Panc1 (cell line): ENCODE measurements at regions of chr3 and their contacts with region 1.

Region 1: GRCh38 chr3:48429960-48430707 is at the start of gene PLXNB1:
- DNase-seq: no peak
- ATAC-seq: no peak
- H3K4me3 ChIP-seq: peak within 1 kb of the TSS; percentile 53 to 59
- H3K27ac ChIP-seq: peak within 1 kb of the TSS; percentile 23; the same call in 1 of the 2 replicates
- H3K4me1 ChIP-seq: peaks cover 4% of the 10 kb centered on the region; the same call in 1 of the 2 replicates
- H3K27me3 ChIP-seq: no peaks in the 10 kb centered on the region
- CTCF ChIP-seq: no peak
- total RNA-seq, gene PLXNB1: 22.8 TPM

Region 2: GRCh38 chr3:48280881-48281280 is 149.3 kb before region 1 on chr3:
- CTCF ChIA-PET with region 1: no interaction called
- POLR2A ChIA-PET with region 1: no interaction called
- in situ Hi-C with region 1: no loop called
- intact Hi-C with region 1: loop called (anchors 5 kb)
- DNase-seq: no peak
- ATAC-seq: no peak
- H3K4me3 ChIP-seq: no peak overlapping the region
- H3K27ac ChIP-seq: no peak overlapping the region
- H3K4me1 ChIP-seq: no peaks in the 10 kb centered on the region
- H3K27me3 ChIP-seq: no peaks in the 10 kb centered on the region
- CTCF ChIP-seq: no peak

Region 3: GRCh38 chr3:48607519-48607918 is 177.4 kb after region 1 on chr3:
- CTCF ChIA-PET with region 1: no interaction called
- POLR2A ChIA-PET with region 1: no interaction called
- in situ Hi-C with region 1: no loop called
- intact Hi-C with region 1: no loop called
- DNase-seq: no peak
- ATAC-seq: no peak
- H3K4me3 ChIP-seq: no peak overlapping the region
- H3K27ac ChIP-seq: no peak overlapping the region
- H3K4me1 ChIP-seq: peaks cover 6% of the 10 kb centered on the region
- H3K27me3 ChIP-seq: no peaks in the 10 kb centered on the region
- CTCF ChIP-seq: no peak

Region 4: GRCh38 chr3:48623851-48624547 is 193.9 kb after region 1 on chr3:
- CTCF ChIA-PET with region 1: no interaction called
- POLR2A ChIA-PET with region 1: no interaction called
- in situ Hi-C with region 1: no loop called
- intact Hi-C with region 1: no loop called
- DNase-seq: no peak
- ATAC-seq: no peak
- H3K4me3 ChIP-seq: no peak overlapping the region
- H3K27ac ChIP-seq: no peak overlapping the region
- H3K4me1 ChIP-seq: no peaks in the 10 kb centered on the region
- H3K27me3 ChIP-seq: no peaks in the 10 kb centered on the region
- CTCF ChIP-seq: no peak

Region 5: DNA sequence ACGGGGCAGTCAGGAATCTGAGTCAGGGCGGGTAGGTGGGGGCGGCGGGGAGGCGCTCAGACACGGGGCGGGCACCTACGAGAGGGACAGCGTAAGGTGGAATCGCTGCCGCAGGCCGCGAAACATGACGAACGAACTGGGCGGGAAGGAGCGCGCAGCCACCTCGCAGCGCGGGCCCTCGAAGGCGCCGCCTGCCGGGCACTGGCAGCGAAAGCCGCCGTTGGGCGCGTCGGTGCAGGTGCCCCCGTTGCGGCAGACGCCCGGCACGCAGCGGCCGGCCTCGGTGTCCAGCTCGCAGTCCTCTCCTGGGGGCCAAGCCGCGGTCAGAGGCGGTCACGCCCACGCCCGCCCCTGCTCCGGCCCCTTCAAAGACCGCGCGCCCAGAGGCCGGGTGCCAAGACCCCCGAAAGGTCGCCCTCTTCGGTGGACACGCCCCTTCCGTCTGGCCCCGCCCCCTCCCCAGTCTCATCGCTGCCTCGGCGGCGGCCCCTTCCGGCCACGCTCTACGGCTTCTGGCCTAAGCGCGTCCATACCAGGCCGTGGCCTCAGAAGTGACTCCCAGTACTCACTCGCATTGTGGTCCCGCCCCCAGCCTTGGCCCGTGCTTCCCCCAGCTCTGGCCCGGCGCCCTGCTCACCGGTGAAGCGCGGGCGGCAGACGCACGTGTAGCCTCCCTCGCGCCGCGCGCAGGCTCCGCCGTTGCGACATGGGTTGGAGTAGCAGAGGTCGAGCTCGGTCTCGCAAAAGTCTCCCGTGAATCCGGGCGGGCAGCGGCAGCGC is 226.1 kb after region 1 on chr3:
- CTCF ChIA-PET with region 1: no interaction called
- POLR2A ChIA-PET with region 1: no interaction called
- in situ Hi-C with region 1: no loop called
- intact Hi-C with region 1: no loop called
- DNase-seq: no peak
- ATAC-seq: peak; percentile 88
- H3K4me3 ChIP-seq: peak overlapping the region; percentile 29 to 30
- H3K27ac ChIP-seq: 0 out of 2 replicates have a peak overlapping the region, but pooled peaks have one; percentile 17
- H3K4me1 ChIP-seq: no peaks in the 10 kb centered on the region
- H3K27me3 ChIP-seq: no peaks in the 10 kb centered on the region
- CTCF ChIP-seq: peak; percentile 82